HCT116 (cell line): ENCODE measurements at regions of chr15 and their contacts with region 1.

Region 1: GRCh38 chr15:52227456-52227855 is 36.3 kb upstream of the GNB5 start:
- DNase-seq: peak; percentile 67
- ATAC-seq: peak; percentile 97
- H3K4me3 ChIP-seq: no peak overlapping the region
- H3K27ac ChIP-seq: no peak overlapping the region
- H3K4me1 ChIP-seq: peaks cover 4 to 10% of the 10 kb centered on the region in 2 experiments; a peak in 3 of 4 replicates
- H3K27me3 ChIP-seq: no peaks in the 10 kb centered on the region
- CTCF ChIP-seq: peak; percentile 35 to 78 (median 67); a peak in 5 of 6 replicates
- POLR2A ChIP-seq: no peak
- RAD21 ChIP-seq: peak; percentile 43

Region 2: GRCh38 chr15:52208306-52208946 is 19.0 kb before region 1 on chr15:
- CTCF ChIA-PET with region 1: interaction called, 12 read pairs
- POLR2A ChIA-PET with region 1: no interaction called
- RAD21 ChIA-PET with region 1: no interaction called
- intact Hi-C with region 1: no loop called
- DNase-seq: peak; percentile 49
- ATAC-seq: peak; percentile 98
- H3K4me3 ChIP-seq: no peak overlapping the region
- H3K27ac ChIP-seq: no peak overlapping the region
- H3K4me1 ChIP-seq: no peaks in the 10 kb centered on the region
- H3K27me3 ChIP-seq: no peaks in the 10 kb centered on the region
- CTCF ChIP-seq: peak; percentile 56 to 94 (median 92); a peak in 5 of 6 replicates
- POLR2A ChIP-seq: no peak
- RAD21 ChIP-seq: peak; percentile 55; the same call in 1 of the 2 replicates

Region 3: DNA sequence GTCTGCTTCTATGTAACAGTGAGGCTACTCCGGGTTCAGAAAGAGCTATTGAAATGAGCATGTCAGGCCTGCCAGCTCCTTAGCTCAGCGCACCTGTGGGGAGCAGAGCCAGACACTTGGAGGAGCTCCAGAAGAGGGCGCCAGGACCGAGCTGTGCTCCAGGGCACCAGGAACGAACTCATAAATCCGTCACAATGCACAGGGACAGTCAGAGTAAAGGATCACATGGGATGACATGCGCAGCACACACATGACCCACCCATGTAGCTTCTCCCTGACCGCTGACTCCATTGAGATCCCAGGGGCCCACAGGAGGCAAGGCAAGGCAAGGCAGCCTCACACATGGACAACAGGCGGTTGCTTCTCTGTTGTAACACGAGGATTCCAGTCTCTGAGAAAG is 10.3 kb before region 1 on chr15:
- CTCF ChIA-PET with region 1: interaction called, 12 read pairs
- POLR2A ChIA-PET with region 1: no interaction called
- RAD21 ChIA-PET with region 1: no interaction called
- intact Hi-C with region 1: no loop called
- DNase-seq: no peak
- ATAC-seq: peak; percentile 93
- H3K4me3 ChIP-seq: no peak overlapping the region
- H3K27ac ChIP-seq: no peak overlapping the region
- H3K4me1 ChIP-seq: no peaks in the 10 kb centered on the region
- H3K27me3 ChIP-seq: no peaks in the 10 kb centered on the region
- CTCF ChIP-seq: peak; percentile 12 to 52 (median 50); a peak in 4 of 6 replicates
- POLR2A ChIP-seq: no peak
- RAD21 ChIP-seq: peak; percentile 38